ENCODE measurements at regions of chr2 and their contacts with region 1.

Region 1: GRCh38 chr2:27380626-27381545 is at the start of gene ZNF513:
- DNase-seq: peak; percentile 91 to 94
- H3K4me3 ChIP-seq: peak within 1 kb of the TSS; percentile 65 to 96 (median 82)
- H3K27ac ChIP-seq: peak within 1 kb of the TSS; percentile 93
- H3K4me1 ChIP-seq: peaks cover 0 to 8% (median 2%) of the 10 kb centered on the region in 4 experiments; a peak in 5 of 7 replicates
- H3K27me3 ChIP-seq: no peaks in the 10 kb centered on the region
- CTCF ChIP-seq: no peak
- EP300 ChIP-seq: peak; percentile 15 to 94
- POLR2A ChIP-seq: peak in 1 of 2 experiments; percentile 84; a peak in 2 of 3 replicates
- RAD21 ChIP-seq: peak in 1 of 2 experiments; percentile 5; a peak in 1 of 4 replicates
- total RNA-seq, gene ZNF513: 17.3 and 18.8 TPM in 2 replicates

Region 2: DNA sequence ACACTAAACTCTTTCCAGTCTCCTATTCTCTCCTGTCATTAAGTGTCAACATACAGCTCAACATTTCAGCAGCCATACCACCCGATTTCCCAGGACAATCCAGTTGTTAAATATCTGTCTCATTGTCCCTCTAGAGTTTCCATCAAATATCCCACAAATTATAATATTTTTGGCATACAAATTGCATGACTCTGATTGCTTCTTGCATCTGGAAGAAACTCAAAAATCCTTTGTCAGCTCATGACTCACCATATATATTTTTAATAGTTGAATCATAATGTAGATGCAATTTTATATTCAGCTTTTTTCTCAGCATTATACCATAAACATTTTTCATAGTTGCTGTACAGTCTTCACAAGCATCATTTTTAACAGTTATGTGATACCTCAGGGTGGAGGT is 125.2 kb before region 1 on chr2:
- CTCF ChIA-PET with region 1: no interaction called
- POLR2A ChIA-PET with region 1: no interaction called
- DNase-seq: no peak
- H3K4me3 ChIP-seq: no peak overlapping the region
- H3K27ac ChIP-seq: no peak overlapping the region
- H3K4me1 ChIP-seq: peaks cover 0 to 8% (median 4%) of the 10 kb centered on the region in 4 experiments; a peak in 6 of 7 replicates
- H3K27me3 ChIP-seq: peaks cover 0 to 12% (median 7%) of the 10 kb centered on the region in 4 experiments; a peak in 5 of 7 replicates
- CTCF ChIP-seq: no peak
- EP300 ChIP-seq: no peak
- POLR2A ChIP-seq: no peak
- RAD21 ChIP-seq: no peak

Region 3: GRCh38 chr2:27370026-27370815 is 10.7 kb before region 1 on chr2 and contains the starts of genes EIF2B4 and SNX17:
- CTCF ChIA-PET with region 1: interaction called, 9 read pairs
- POLR2A ChIA-PET with region 1: interaction called, 114 read pairs
- DNase-seq: peak; percentile 98 to 99
- H3K4me3 ChIP-seq: peak within 1 kb of the TSS; percentile 72 to 99 (median 88)
- H3K27ac ChIP-seq: peak within 1 kb of the TSS; percentile 62
- H3K4me1 ChIP-seq: peaks cover 0 to 4% (median 2%) of the 10 kb centered on the region in 4 experiments; a peak in 4 of 7 replicates
- H3K27me3 ChIP-seq: no peaks in the 10 kb centered on the region
- CTCF ChIP-seq: peak in 2 of 3 experiments; percentile 71 to 87; a peak in 3 of 4 replicates
- EP300 ChIP-seq: peak in 1 of 2 experiments; percentile 42; a peak in 1 of 3 replicates
- POLR2A ChIP-seq: peak in 1 of 2 experiments; percentile 84; a peak in 2 of 3 replicates
- RAD21 ChIP-seq: peak; percentile 50 to 58; a peak in 3 of 4 replicates
- total RNA-seq, gene EIF2B4: 63.2 and 66.0 TPM in 2 replicates
- total RNA-seq, gene SNX17: 54.9 and 59.1 TPM in 2 replicates

Measured in H1 (cell line).